Heart right ventricle (tissue), 16 donors: ENCODE measurements at regions of chr1 and their contacts with region 1.

Region 1: DNA sequence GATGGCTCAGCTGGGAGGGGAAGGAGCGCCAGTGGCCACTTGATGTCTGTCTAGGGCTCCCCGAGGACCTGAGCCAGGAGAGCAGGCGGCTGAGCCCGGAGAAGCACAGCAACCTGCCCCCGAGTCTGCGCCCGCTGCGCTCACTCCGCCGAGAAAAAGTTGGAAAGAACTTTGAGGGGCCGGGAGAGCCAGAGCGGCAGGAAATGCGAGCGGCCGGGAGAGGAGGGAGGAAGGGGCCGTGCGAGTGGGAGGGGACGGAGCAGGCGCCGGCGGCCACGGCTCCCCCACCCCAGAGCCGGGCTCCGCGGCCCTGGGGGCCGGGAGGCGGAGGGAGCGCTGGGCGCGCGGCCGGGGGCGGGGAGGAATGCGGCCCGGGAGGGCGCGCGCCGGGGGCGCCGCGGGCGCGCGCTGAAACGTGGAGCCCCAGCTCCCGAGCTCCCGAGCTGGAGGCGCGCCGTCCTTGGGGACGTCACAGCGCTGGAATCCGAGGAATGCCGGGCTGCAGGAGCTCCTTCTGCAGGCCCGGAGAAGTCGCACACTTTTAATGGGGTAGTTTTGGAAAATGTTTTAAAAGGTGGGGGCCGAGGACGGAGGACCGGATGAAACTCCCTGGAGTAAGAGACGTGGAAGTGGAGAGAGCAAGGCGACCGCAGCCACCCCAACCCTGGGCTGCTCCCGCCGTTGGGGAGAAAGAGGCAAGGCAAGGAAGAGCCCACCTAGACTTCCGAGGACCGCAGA is at the start of gene PTPN14:
- DNase-seq: peak; percentile 89
- ATAC-seq: peak; percentile 88 to 94 (median 90)
- H3K4me3 ChIP-seq: peak within 1 kb of the TSS; percentile 63 to 95 (median 88)
- H3K27ac ChIP-seq: peak within 1 kb of the TSS; percentile 92 to 99 (median 98)
- H3K4me1 ChIP-seq: peaks cover 5 to 52% (median 44%) of the 10 kb centered on the region in 9 donors
- H3K27me3 ChIP-seq: peaks cover 0 to 32% (median 0%) of the 10 kb centered on the region in 7 donors
- CTCF ChIP-seq: peak in 7 of 9 donors; percentile 23 to 69 (median 35)
- total RNA-seq, gene PTPN14: 23.5 to 71.6 (median 45.5) TPM

Region 2: GRCh38 chr1:214397497-214397896 is 154.1 kb before region 1 on chr1:
- intact Hi-C with region 1: loop called in 2 of 10 experiments (anchors 10 kb)
- DNase-seq: no peak
- ATAC-seq: no peak
- H3K4me3 ChIP-seq: no peak overlapping the region
- H3K27ac ChIP-seq: no peak overlapping the region
- H3K4me1 ChIP-seq: peaks cover 0 to 10% (median 0%) of the 10 kb centered on the region in 9 donors
- H3K27me3 ChIP-seq: no peaks in the 10 kb centered on the region
- CTCF ChIP-seq: no peak

Region 3: DNA sequence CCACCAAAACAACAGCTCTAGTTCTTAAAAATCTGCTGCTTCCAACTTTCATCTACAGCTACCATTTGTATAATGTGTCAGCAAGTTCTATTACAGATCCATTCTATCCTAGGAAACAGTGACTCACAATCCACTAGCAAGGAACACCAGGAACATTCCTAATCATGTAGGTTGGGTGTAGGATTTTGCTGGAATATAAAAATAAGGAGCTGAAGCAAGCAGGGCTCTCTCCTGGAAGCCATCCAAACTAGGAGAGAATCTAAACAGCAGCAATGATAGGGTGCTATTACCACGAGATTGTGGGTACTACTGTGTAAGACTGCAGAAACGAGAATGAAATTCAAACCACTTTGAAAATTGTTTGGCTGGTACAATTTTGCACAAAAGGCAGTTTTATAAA is 135.2 kb before region 1 on chr1:
- intact Hi-C with region 1: loop called in 2 of 10 experiments (anchors 5 kb)
- DNase-seq: no peak
- ATAC-seq: peak in 6 of 8 donors; percentile 53 to 76 (median 66)
- H3K4me3 ChIP-seq: no peak overlapping the region
- H3K27ac ChIP-seq: peak overlapping the region in 6 of 10 donors; percentile 2 to 69 (median 23)
- H3K4me1 ChIP-seq: peaks cover 4 to 59% (median 50%) of the 10 kb centered on the region in 9 donors
- H3K27me3 ChIP-seq: no peaks in the 10 kb centered on the region
- CTCF ChIP-seq: no peak

Region 4: GRCh38 chr1:214476958-214477870 is 74.4 kb before region 1 on chr1:
- intact Hi-C with region 1: loop called in 1 of 10 experiments (anchors 5 kb)
- DNase-seq: no peak
- ATAC-seq: peak in 2 of 8 donors; percentile 27 to 43
- H3K4me3 ChIP-seq: no peak overlapping the region
- H3K27ac ChIP-seq: no peak overlapping the region
- H3K4me1 ChIP-seq: peaks cover 2 to 58% (median 42%) of the 10 kb centered on the region in 9 donors
- H3K27me3 ChIP-seq: no peaks in the 10 kb centered on the region
- CTCF ChIP-seq: no peak

Region 5: DNA sequence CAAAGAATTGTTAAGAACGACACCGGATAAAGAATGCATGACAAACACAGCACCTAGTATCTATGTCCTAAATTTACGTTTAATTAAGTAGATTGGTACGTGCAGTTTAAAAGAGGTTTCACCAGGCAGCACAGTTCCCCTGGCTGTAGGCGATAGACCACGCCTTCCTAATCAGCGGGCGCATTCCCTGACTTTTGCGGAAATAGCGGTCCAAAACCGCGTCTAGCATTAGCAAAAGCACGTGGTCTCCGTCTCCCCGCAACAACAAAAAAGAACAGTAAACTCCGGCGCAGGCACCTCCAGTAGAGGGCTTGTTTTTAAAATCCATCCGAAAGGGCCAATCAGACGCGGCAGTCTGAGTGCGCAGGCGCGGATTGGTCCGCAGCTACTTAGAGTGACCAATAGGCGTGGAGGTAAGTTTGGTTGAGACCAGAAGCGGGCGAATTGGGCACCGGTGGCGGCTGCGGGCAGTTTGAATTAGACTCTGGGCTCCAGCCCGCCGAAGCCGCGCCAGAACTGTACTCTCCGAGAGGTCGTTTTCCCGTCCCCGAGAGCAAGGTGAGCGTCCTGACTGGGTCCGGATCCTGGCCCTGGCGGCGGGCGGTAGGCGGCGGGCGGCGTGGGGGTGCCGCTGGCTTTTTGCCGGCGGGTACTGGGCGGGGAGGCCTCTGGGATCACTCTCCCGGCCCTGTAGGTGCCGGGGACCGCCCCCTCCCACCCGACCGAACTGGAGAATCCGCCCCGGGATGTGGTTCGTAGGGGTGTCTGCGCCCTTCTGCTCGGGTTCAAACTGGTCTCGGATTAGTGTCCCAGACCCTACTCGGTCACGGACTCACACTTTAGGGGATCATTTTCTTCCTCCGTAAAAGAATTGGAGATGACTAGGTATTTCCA is 51.4 kb after region 1 on chr1 and contains the start of gene CENPF:
- intact Hi-C with region 1: loop called in 1 of 10 experiments (anchors 5 kb)
- DNase-seq: peak; percentile 92 to 95
- ATAC-seq: peak; percentile 99 to 100 (median 100)
- H3K4me3 ChIP-seq: peak within 1 kb of the TSS; percentile 45 to 96 (median 75)
- H3K27ac ChIP-seq: peak within 1 kb of the TSS in 3 of 10 donors; percentile 16 to 53 (median 28)
- H3K4me1 ChIP-seq: peaks cover 0 to 19% (median 8%) of the 10 kb centered on the region in 9 donors
- H3K27me3 ChIP-seq: no peaks in the 10 kb centered on the region
- CTCF ChIP-seq: peak in 7 of 9 donors; percentile 26 to 55 (median 42)
- total RNA-seq, gene CENPF: 0.15 to 8.7 (median 0.84) TPM

Region 6: DNA sequence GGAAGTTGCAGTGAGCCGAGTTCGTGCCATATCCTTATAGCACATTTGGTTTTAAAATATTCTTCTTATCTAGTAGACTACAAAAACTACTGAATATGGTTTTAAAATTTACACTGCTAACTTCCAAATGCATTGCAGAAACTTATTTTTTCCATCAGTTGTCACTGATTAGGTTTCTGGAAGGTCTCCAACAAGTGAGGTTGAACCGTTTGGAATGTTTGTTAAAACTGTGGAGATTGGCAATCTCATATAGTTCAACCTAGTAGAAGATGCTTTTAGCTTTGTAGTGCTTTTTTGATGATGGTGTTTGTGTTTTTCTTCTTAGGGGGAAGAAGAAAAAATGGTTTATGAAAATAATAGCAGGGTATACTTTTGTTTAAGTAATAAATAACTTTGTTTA is 64.3 kb after region 1 on chr1:
- intact Hi-C with region 1: no loop called
- DNase-seq: no peak
- ATAC-seq: no peak
- H3K4me3 ChIP-seq: no peak overlapping the region
- H3K27ac ChIP-seq: no peak overlapping the region
- H3K4me1 ChIP-seq: no peaks in the 10 kb centered on the region
- H3K27me3 ChIP-seq: no peaks in the 10 kb centered on the region
- CTCF ChIP-seq: no peak